ENCODE measurements at regions of chr16 and their contacts with region 1.

Region 1: GRCh38 chr16:28211712-28212534 is at the start of gene XPO6:
- DNase-seq: peak; percentile 94
- H3K4me3 ChIP-seq: peak within 1 kb of the TSS; percentile 68
- H3K27ac ChIP-seq: peak within 1 kb of the TSS; percentile 70
- H3K4me1 ChIP-seq: peaks cover 7% of the 10 kb centered on the region
- H3K27me3 ChIP-seq: no peaks in the 10 kb centered on the region
- CTCF ChIP-seq: no peak
- total RNA-seq, gene XPO6: 155 and 159 TPM in 2 replicates

Region 2: GRCh38 chr16:28130099-28131088 is 81.5 kb before region 1 on chr16:
- CTCF ChIA-PET with region 1: no interaction called
- POLR2A ChIA-PET with region 1: no interaction called
- intact Hi-C with region 1: no loop called
- DNase-seq: no peak
- H3K4me3 ChIP-seq: no peak overlapping the region
- H3K27ac ChIP-seq: peak overlapping the region; percentile 48
- H3K4me1 ChIP-seq: peaks cover 4% of the 10 kb centered on the region
- H3K27me3 ChIP-seq: no peaks in the 10 kb centered on the region
- CTCF ChIP-seq: no peak

Region 3: DNA sequence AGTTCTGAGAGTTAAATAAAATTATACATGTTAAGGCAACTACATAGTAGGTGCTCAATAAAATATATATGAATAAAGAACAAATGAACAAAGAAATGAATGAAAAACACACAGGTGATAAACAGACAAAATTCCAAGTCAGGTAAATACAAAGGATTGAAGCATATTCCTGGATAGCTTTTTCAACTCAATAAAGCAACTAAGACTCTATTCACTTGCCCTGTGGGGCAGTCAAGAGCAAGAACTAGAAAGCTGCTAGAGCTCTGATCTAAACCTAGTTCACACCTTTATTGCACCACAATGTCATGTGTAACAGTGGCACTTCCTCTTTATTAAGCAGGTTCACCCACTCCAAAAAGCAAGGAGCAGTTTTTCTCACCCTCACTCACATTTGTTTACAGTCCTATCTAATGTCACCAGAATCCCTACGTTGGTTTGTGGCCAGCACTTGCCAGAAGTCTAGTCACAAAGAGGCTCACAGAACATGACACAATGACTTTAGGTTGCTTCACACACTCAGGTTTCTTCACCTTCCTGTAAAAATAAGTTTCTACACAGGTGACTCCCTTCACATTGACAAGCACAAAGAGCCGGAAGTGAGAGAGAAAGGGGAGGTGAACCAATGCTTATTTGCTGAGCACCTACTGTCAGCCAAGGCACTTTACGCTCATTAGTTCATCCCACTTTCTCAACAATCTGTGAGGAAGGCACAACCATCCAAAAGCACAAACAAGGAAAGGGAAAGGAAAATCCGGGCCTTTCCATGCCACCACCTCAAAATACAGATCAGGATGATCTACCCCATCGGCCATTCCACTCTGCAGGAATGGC is 70.9 kb before region 1 on chr16:
- CTCF ChIA-PET with region 1: interaction called, 4 read pairs
- POLR2A ChIA-PET with region 1: no interaction called
- intact Hi-C with region 1: loop called (anchors 5 kb)
- DNase-seq: no peak
- H3K4me3 ChIP-seq: peak overlapping the region; percentile 18
- H3K27ac ChIP-seq: peak overlapping the region; percentile 91
- H3K4me1 ChIP-seq: peaks cover 42% of the 10 kb centered on the region
- H3K27me3 ChIP-seq: no peaks in the 10 kb centered on the region
- CTCF ChIP-seq: no peak

Region 4: DNA sequence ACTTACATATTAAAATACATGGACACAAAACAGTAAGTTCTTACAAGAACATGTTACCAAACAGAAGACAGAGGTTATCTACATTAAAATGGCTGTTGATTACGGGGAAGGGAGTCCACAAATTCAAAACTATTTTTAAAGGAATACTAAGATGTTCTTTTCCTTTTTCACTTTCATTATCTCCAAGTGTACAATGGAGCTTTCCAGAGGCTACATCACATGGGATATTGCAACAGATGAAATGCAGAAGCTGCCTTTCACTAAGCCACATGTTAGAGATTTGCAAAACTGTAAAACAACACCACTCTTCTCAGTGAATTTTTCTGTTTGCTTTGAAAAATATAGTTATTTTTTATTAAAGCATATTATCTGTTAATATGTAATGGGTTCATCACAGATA is 53.8 kb before region 1 on chr16:
- CTCF ChIA-PET with region 1: no interaction called
- POLR2A ChIA-PET with region 1: no interaction called
- intact Hi-C with region 1: no loop called
- DNase-seq: no peak
- H3K4me3 ChIP-seq: no peak overlapping the region
- H3K27ac ChIP-seq: no peak overlapping the region
- H3K4me1 ChIP-seq: peaks cover 25% of the 10 kb centered on the region
- H3K27me3 ChIP-seq: no peaks in the 10 kb centered on the region
- CTCF ChIP-seq: no peak

Region 5: GRCh38 chr16:28304214-28304613 is 92.3 kb after region 1 on chr16:
- CTCF ChIA-PET with region 1: no interaction called
- POLR2A ChIA-PET with region 1: no interaction called
- intact Hi-C with region 1: no loop called
- DNase-seq: peak; percentile 46
- H3K4me3 ChIP-seq: no peak overlapping the region
- H3K27ac ChIP-seq: no peak overlapping the region
- H3K4me1 ChIP-seq: peaks cover 1% of the 10 kb centered on the region
- H3K27me3 ChIP-seq: no peaks in the 10 kb centered on the region
- CTCF ChIP-seq: no peak

Measured in A673 (cell line).